Upper lobe of right lung (tissue), 1 donor: ENCODE measurements at regions of chr5 and their contacts with region 1.

Region 1: GRCh38 chr5:64229163-64229774 is 63.6 kb downstream of the RNF180 start:
- DNase-seq: no peak
- ATAC-seq: peak; percentile 14
- H3K4me3 ChIP-seq: no peak overlapping the region
- H3K27ac ChIP-seq: no peak overlapping the region
- H3K4me1 ChIP-seq: no peaks in the 10 kb centered on the region
- H3K27me3 ChIP-seq: no peaks in the 10 kb centered on the region
- CTCF ChIP-seq: peak; percentile 67

Region 2: GRCh38 chr5:63963080-63963735 is 266.1 kb before region 1 on chr5:
- intact Hi-C with region 1: no loop called
- DNase-seq: no peak
- ATAC-seq: peak; percentile 76
- H3K4me3 ChIP-seq: no peak overlapping the region
- H3K27ac ChIP-seq: no peak overlapping the region
- H3K4me1 ChIP-seq: no peaks in the 10 kb centered on the region
- H3K27me3 ChIP-seq: peaks cover 37% of the 10 kb centered on the region
- CTCF ChIP-seq: peak; percentile 53

Region 3: DNA sequence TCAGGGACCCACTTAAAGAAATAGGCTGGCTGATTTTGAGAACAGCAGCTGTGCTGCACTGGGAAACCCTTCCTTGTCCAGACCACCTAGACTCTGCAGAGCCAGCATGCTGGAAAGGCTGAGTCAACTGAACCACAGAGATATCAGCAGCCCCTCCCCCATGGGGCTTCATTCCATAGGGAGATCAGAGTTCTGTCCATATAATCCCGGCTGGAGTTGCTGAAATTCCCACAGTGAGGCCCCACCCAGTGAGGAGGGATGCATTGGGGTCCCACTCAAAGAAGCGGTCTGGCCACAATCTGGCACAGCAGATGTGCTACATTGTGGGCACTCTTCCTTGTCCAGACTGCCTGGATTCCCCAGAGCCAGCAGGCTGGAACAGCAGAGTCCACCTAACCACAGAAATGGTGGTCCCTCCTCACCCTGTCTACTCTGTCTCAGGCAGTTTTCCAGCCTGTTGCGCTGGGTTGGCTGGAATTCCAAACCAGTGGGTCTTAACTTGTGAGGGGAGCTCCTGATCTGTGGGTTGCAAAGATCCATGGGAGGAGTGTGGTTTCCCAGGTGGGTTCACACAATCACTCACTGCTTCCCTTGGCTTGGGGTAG is 63.4 kb after region 1 on chr5:
- intact Hi-C with region 1: no loop called
- DNase-seq: no peak
- ATAC-seq: no peak
- H3K4me3 ChIP-seq: no peak overlapping the region
- H3K27ac ChIP-seq: no peak overlapping the region
- H3K4me1 ChIP-seq: no peaks in the 10 kb centered on the region
- H3K27me3 ChIP-seq: no peaks in the 10 kb centered on the region
- CTCF ChIP-seq: no peak

Region 4: DNA sequence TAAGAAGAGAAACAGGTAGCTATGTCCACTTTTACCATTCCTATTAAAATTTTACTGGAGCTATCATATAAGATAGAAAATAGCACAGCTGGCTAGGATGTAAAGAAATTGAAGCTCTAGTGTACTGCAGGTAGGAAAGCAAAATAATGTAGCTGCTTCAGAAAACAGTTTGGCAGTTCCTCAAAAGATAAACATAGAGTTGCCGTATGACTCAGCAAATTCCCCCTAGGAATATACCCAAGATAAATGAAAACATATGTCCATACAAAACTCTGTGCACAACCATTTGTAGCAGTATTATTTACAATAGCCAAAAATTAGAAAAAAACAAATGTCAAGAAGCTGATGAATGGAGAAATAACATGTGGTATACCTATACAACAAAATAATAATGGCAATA is 396.4 kb after region 1 on chr5:
- intact Hi-C with region 1: loop called (anchors 10 kb)
- DNase-seq: no peak
- ATAC-seq: no peak
- H3K4me3 ChIP-seq: no peak overlapping the region
- H3K27ac ChIP-seq: no peak overlapping the region
- H3K4me1 ChIP-seq: no peaks in the 10 kb centered on the region
- H3K27me3 ChIP-seq: no peaks in the 10 kb centered on the region
- CTCF ChIP-seq: no peak